ENCODE measurements at regions of chr2 and their contacts with region 1.

Region 1: DNA sequence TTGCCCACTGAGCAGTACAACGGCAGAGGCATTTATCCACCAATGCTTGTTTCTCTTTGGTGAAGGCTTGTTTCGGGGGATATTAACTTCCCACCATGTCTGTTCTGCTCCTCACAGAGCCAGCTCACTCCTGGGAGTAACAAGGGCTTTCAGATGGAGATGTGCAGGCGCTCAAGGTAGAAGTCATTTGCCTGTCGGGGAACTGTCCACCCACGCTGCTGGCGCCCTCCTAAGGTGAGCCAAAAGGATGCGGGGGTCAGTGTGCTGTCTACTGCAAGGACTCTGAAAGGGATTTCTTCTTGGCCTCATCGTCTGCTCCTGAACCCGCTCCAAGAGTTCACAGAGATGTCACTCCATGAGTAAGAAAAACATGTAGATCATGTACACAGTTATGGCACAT is 57.0 kb upstream of the CYRIA start:
- DNase-seq: no peak
- ATAC-seq: peak; percentile 72
- H3K4me3 ChIP-seq: no peak overlapping the region
- H3K27ac ChIP-seq: no peak overlapping the region
- H3K4me1 ChIP-seq: peaks cover 0 to 5% of the 10 kb centered on the region in 2 experiments; a peak in 3 of 5 replicates
- H3K27me3 ChIP-seq: peaks cover 11 to 16% of the 10 kb centered on the region in 2 experiments; a peak in 4 of 5 replicates
- CTCF ChIP-seq: peak; percentile 24 to 53 (median 41); a peak in 4 of 6 replicates
- EP300 ChIP-seq: no peak
- POLR2A ChIP-seq: no peak
- RAD21 ChIP-seq: peak; percentile 66 to 72

Region 2: GRCh38 chr2:16617282-16618261 is 105.1 kb before region 1 on chr2:
- CTCF ChIA-PET with region 1: interaction called, 4 read pairs
- POLR2A ChIA-PET with region 1: no interaction called
- in situ Hi-C with region 1: no loop called
- intact Hi-C with region 1: loop called (anchors 1 kb)
- DNase-seq: peak; percentile 24 to 58 (median 51)
- ATAC-seq: peak; percentile 61
- H3K4me3 ChIP-seq: no peak overlapping the region
- H3K27ac ChIP-seq: no peak overlapping the region
- H3K4me1 ChIP-seq: peaks cover 3 to 12% of the 10 kb centered on the region in 2 experiments; a peak in 3 of 5 replicates
- H3K27me3 ChIP-seq: no peaks in the 10 kb centered on the region
- CTCF ChIP-seq: peak; percentile 55 to 77 (median 64); a peak in 5 of 6 replicates
- EP300 ChIP-seq: no peak
- POLR2A ChIP-seq: no peak
- RAD21 ChIP-seq: peak; percentile 76 to 90

Region 3: GRCh38 chr2:16747689-16748088 is 25.0 kb after region 1 on chr2:
- CTCF ChIA-PET with region 1: interaction called, 15 read pairs
- POLR2A ChIA-PET with region 1: interaction called, 3 read pairs
- in situ Hi-C with region 1: no loop called
- intact Hi-C with region 1: no loop called
- DNase-seq: no peak
- ATAC-seq: no peak
- H3K4me3 ChIP-seq: no peak overlapping the region
- H3K27ac ChIP-seq: no peak overlapping the region
- H3K4me1 ChIP-seq: peaks cover 13 to 31% of the 10 kb centered on the region in 2 experiments
- H3K27me3 ChIP-seq: no peaks in the 10 kb centered on the region; a peak in 1 of 5 replicates
- CTCF ChIP-seq: no peak
- EP300 ChIP-seq: no peak
- POLR2A ChIP-seq: no peak
- RAD21 ChIP-seq: no peak

Measured in K562 (cell line).